ENCODE measurements at regions of chr11 and their contacts with region 1.

Region 1: GRCh38 chr11:65652511-65653231 is 10.0 kb downstream of the RELA start:
- DNase-seq: peak; percentile 93 to 99 (median 97)
- ATAC-seq: peak; percentile 80
- H3K4me3 ChIP-seq: peak overlapping the region; percentile 69 to 83
- H3K4me3 Mint-ChIP-seq: peak overlapping the region; percentile 86
- H3K27ac ChIP-seq: peak overlapping the region; percentile 94 to 100
- H3K27ac Mint-ChIP-seq: peak overlapping the region; percentile 98
- H3K4me1 ChIP-seq: peaks cover 27% of the 10 kb centered on the region
- H3K4me1 Mint-ChIP-seq: peaks cover 45% of the 10 kb centered on the region
- H3K27me3 ChIP-seq: no peaks in the 10 kb centered on the region
- H3K27me3 Mint-ChIP-seq: no peaks in the 10 kb centered on the region
- CTCF ChIP-seq: no peak

Region 2: GRCh38 chr11:65625628-65626342 is 26.9 kb before region 1 on chr11:
- CTCF ChIA-PET with region 1: interaction called, 15 read pairs
- POLR2A ChIA-PET with region 1: interaction called, 13 read pairs
- intact Hi-C with region 1: no loop called
- DNase-seq: peak in 8 of 9 experiments; percentile 24 to 83 (median 63)
- ATAC-seq: peak; percentile 88
- H3K4me3 ChIP-seq: no peak overlapping the region
- H3K4me3 Mint-ChIP-seq: no peak overlapping the region
- H3K27ac ChIP-seq: no peak overlapping the region
- H3K27ac Mint-ChIP-seq: peak overlapping the region; percentile 55
- H3K4me1 ChIP-seq: peaks cover 5% of the 10 kb centered on the region
- H3K4me1 Mint-ChIP-seq: peaks cover 9% of the 10 kb centered on the region
- H3K27me3 ChIP-seq: no peaks in the 10 kb centered on the region
- H3K27me3 Mint-ChIP-seq: no peaks in the 10 kb centered on the region
- CTCF ChIP-seq: peak; percentile 66

Region 3: GRCh38 chr11:65662799-65663638 is 10.3 kb after region 1 on chr11 and contains the start of gene RELA:
- CTCF ChIA-PET with region 1: interaction called, 8 read pairs
- POLR2A ChIA-PET with region 1: interaction called, 89 read pairs
- intact Hi-C with region 1: loop called (anchors 1 kb)
- DNase-seq: peak; percentile 79 to 95 (median 89)
- ATAC-seq: peak; percentile 83
- H3K4me3 ChIP-seq: peak within 1 kb of the TSS; percentile 77 to 88
- H3K4me3 Mint-ChIP-seq: peak within 1 kb of the TSS; percentile 86
- H3K27ac ChIP-seq: peak within 1 kb of the TSS; percentile 92 to 98
- H3K27ac Mint-ChIP-seq: peak within 1 kb of the TSS; percentile 92
- H3K4me1 ChIP-seq: peaks cover 27% of the 10 kb centered on the region
- H3K4me1 Mint-ChIP-seq: peaks cover 38% of the 10 kb centered on the region
- H3K27me3 ChIP-seq: no peaks in the 10 kb centered on the region
- H3K27me3 Mint-ChIP-seq: no peaks in the 10 kb centered on the region
- CTCF ChIP-seq: no peak
- total RNA-seq, gene RELA: 380 to 384 TPM

Region 4: DNA sequence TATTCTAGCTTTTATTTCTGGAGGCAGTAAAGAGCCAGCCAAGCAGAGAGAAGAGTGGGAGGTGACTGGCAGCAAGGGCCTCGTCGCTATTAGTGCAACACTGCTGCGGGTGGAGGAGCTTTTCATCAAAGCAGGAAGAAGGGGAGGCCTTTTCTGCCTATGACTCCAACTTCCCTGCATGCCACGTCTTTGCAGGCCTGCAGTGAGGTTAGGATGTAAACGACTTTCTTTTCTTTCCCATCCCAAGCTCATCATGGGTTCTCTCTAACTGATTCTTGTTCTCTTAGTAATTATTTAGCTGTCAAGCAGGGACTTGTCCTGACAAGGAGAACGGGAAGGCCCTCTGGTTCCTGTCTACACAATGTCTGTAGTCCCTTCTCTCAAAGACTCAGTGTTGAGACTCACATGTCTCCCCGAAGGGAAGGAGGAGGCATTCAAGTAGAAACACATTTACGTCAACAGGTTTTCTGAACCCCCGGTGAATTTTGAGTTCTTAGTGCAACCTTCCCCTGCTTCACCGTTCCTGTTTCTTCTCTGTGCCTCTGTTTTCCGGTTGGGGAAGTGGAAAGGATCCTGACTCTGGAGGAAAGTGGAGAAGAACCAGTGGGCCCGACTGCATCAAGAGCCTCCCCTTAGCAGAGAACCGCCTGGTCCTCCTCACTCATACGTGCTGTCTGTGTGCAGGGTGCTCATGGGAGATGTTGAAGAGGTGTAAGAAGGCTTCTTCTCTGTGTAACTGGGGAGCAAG is 474.3 kb after region 1 on chr11:
- CTCF ChIA-PET with region 1: no interaction called
- POLR2A ChIA-PET with region 1: no interaction called
- intact Hi-C with region 1: no loop called
- DNase-seq: peak; percentile 18 to 79 (median 61)
- ATAC-seq: peak; percentile 94
- H3K4me3 ChIP-seq: peak overlapping the region; percentile 2 to 6
- H3K4me3 Mint-ChIP-seq: peak overlapping the region; percentile 78
- H3K27ac ChIP-seq: peak overlapping the region; percentile 37 to 73
- H3K27ac Mint-ChIP-seq: peak overlapping the region; percentile 99
- H3K4me1 ChIP-seq: peaks cover 70% of the 10 kb centered on the region
- H3K4me1 Mint-ChIP-seq: peaks cover 80% of the 10 kb centered on the region
- H3K27me3 ChIP-seq: no peaks in the 10 kb centered on the region
- H3K27me3 Mint-ChIP-seq: no peaks in the 10 kb centered on the region
- CTCF ChIP-seq: no peak

Measured in CD8-positive, alpha-beta T cell (primary cell).